ENCODE measurements at regions of chr5 and their contacts with region 1.

Region 1: DNA sequence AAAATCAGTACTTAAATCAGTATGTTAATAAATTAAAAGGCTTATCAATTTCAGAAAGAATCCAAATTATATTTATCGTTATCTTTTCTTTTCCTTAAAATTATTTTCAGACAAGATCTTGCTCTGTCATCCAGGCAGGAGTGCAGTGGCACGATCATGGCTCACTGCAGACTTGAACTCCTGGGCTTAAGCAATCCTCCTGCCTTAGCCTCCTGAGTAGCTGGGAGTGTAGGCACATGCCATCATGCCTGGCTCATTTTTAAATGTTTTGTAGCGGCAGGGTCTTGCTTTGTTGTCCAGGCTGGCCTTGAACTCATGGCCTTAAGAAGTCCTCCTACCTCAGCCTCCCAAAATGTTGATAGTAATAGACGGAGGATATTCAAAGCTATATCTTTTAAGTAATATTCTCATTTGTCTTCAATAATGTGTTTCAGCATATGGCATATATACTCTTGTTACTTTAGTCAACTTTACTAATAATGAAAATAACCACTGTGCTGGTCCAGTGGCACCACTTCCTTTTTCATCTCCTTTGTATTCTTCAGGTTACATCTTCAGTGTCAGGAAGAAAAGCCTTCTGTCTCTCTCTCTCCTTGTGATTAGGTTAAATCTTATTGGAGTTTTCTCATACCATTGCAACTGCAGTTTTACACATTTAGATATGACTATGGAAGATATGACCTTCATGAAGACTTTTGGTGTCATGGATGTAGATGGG is 31.1 kb downstream of the PARP8 start:
- DNase-seq: no peak
- H3K4me3 Mint-ChIP-seq: no peak overlapping the region
- H3K27ac Mint-ChIP-seq: peak overlapping the region; percentile 3
- H3K4me1 Mint-ChIP-seq: peaks cover 70% of the 10 kb centered on the region
- H3K27me3 Mint-ChIP-seq: no peaks in the 10 kb centered on the region

Region 2: DNA sequence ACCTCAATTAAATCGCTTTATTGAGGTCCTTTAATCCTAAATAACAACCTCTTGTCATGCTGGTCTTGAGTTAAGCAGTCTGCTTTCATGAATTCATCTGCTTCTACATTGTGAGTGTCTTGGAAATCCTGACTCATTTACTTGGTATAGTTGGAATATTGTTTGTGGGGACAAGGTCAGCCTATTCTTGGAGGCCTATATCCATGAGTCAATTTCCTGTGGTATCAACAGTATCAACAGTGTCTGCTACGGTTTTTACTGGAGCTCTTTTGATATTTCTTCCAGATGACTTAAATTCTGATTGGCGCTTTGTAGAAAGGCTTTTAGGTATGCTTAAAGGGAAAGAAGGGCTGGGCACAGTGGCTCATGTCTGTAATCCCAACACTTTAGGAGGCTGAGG is 102.4 kb before region 1 on chr5:
- CTCF ChIA-PET with region 1: no interaction called
- POLR2A ChIA-PET with region 1: no interaction called
- intact Hi-C with region 1: loop called (anchors 10 kb)
- DNase-seq: no peak
- H3K4me3 Mint-ChIP-seq: no peak overlapping the region
- H3K27ac Mint-ChIP-seq: peak overlapping the region; percentile 80
- H3K4me1 Mint-ChIP-seq: peaks cover 42% of the 10 kb centered on the region
- H3K27me3 Mint-ChIP-seq: no peaks in the 10 kb centered on the region

Region 3: DNA sequence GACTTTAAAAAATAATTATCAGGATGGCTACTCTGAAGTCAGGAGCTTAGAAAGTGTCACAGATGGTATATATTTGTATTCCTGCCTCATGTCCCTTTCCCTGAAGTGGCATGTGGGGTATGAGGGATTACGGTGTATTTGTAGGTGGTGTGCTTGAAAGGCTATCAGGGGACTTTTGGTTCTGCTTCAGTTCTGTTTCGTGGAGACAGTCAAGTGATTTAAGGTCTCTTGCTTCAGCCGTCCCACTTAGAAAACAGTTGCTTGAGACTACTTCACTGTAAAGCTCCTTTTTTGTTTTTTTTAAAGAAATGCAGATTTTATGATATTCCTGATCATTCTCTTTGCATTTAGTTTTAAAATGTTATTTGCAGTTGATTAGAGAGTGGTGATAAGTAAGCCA is 12.9 kb before region 1 on chr5:
- CTCF ChIA-PET with region 1: interaction called, 4 read pairs
- POLR2A ChIA-PET with region 1: no interaction called
- intact Hi-C with region 1: loop called (anchors 2 kb)
- DNase-seq: no peak
- H3K4me3 Mint-ChIP-seq: no peak overlapping the region
- H3K27ac Mint-ChIP-seq: no peak overlapping the region
- H3K4me1 Mint-ChIP-seq: peaks cover 56% of the 10 kb centered on the region
- H3K27me3 Mint-ChIP-seq: no peaks in the 10 kb centered on the region

Region 4: DNA sequence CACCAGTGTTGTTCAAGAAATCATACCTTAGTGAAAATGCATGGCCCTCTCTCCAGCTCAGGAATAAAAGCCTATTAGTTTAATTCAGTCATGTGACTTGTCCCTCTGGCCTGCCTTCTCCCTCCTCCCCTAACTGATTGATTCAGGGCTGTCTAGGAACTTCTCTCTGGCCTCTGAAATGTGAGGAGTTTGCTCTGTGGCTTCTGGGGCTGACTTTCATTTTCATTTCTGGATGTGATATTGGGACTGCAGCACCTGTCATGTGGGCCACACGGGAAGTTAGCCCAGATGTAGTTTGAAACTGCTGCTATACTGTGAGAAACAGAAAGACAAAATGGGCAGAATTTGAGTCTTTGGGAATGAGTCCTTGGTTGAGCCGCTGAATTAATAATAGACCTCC is 13.7 kb after region 1 on chr5:
- CTCF ChIA-PET with region 1: interaction called, 5 read pairs
- POLR2A ChIA-PET with region 1: interaction called, 3 read pairs
- intact Hi-C with region 1: loop called (anchors 1 kb)
- DNase-seq: peak; percentile 74
- H3K4me3 Mint-ChIP-seq: peak overlapping the region; percentile 54
- H3K27ac Mint-ChIP-seq: peak overlapping the region; percentile 60
- H3K4me1 Mint-ChIP-seq: peaks cover 81% of the 10 kb centered on the region
- H3K27me3 Mint-ChIP-seq: no peaks in the 10 kb centered on the region

Measured in activated CD4-positive, alpha-beta memory T cell treated with anti-CD3 and anti-CD28 coated beads for 36 hours (primary cell).